Gastrocnemius medialis (tissue), 4 donors: ENCODE measurements at regions of chrX and their contacts with region 1.

Region 1: DNA sequence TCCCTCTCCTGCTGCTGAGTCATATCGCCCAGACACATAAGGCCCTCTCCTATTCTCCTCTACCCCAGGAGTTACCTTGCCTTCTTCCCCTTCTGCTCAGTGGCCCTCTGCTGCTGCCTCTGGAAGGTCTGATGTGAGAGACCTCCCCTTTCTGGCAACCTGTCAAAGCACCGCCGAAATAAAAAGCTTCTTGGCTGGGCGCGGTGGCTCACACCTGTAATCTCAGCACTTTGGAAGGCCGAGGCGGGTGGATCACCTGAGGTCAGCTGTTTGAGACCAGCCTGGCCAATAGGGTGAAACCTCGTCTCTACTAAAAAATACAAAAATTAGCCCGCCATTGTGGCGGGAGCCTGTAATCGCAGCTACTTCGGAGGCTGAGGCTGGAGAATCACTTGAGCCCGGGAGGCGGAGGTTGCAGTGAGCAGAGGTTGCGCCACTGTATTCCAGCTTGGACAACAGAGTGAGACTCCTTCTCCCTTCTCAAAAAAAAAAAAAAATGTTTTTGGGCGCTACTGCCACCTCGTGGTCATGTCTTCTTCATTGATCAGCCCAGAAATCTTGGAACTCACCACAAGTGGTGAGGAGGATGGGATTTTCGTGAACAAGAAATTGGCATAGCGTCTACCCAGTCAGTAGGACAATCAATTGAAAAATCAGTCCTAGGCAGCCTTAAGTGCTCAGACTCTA is 8.6 kb upstream of the ZXDA start:
- DNase-seq: no peak
- ATAC-seq: peak in 1 of 2 donors; percentile 61
- H3K4me3 ChIP-seq: no peak overlapping the region
- H3K27ac ChIP-seq: no peak overlapping the region
- H3K4me1 ChIP-seq: peaks cover 0 to 4% of the 10 kb centered on the region in 2 donors
- H3K27me3 ChIP-seq: no peaks in the 10 kb centered on the region
- CTCF ChIP-seq: peak in 3 of 5 experiments; percentile 35 to 59 (median 36)
- POLR2A ChIP-seq: no peak

Region 2: GRCh38 chrX:57595381-57595811 is 323.5 kb before region 1 on chrX:
- in situ Hi-C with region 1: loop called in 2 of 4 experiments (anchors 10 to 25 kb)
- intact Hi-C with region 1: no loop called
- DNase-seq: no peak
- ATAC-seq: no peak
- H3K4me3 ChIP-seq: peak overlapping the region; percentile 13 to 38 (median 20)
- H3K27ac ChIP-seq: peak overlapping the region; percentile 23 to 64 (median 50)
- H3K4me1 ChIP-seq: peaks cover 20 to 36% of the 10 kb centered on the region in 2 donors
- H3K27me3 ChIP-seq: no peaks in the 10 kb centered on the region
- CTCF ChIP-seq: no peak
- POLR2A ChIP-seq: no peak

Region 3: DNA sequence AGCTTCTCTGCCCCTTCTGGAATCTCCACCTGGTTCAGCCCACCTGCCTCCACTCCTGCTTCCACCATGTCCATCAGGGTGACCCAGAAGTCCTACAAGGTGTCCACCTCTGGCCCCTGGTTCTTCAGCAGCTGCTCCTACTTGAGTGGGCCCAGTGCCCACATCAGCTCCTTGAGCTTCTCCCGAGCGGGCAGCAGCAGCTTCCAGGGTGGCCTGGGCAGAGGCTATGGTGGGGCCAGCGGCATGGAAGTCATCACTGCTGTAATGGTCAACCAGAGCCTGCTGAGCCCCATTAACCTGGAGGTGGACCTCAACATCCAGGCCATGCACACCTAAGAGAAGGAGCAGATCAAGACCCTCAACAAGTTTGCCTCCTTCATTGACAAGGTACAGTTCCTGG is 65.7 kb after region 1 on chrX:
- in situ Hi-C with region 1: no loop called
- intact Hi-C with region 1: no loop called
- DNase-seq: no peak
- ATAC-seq: no peak
- H3K4me3 ChIP-seq: no peak overlapping the region
- H3K27ac ChIP-seq: no peak overlapping the region
- H3K4me1 ChIP-seq: no peaks in the 10 kb centered on the region
- H3K27me3 ChIP-seq: no peaks in the 10 kb centered on the region
- CTCF ChIP-seq: no peak
- POLR2A ChIP-seq: no peak